A673 (cell line): ENCODE measurements at regions of chr10 and their contacts with region 1.

Region 1: DNA sequence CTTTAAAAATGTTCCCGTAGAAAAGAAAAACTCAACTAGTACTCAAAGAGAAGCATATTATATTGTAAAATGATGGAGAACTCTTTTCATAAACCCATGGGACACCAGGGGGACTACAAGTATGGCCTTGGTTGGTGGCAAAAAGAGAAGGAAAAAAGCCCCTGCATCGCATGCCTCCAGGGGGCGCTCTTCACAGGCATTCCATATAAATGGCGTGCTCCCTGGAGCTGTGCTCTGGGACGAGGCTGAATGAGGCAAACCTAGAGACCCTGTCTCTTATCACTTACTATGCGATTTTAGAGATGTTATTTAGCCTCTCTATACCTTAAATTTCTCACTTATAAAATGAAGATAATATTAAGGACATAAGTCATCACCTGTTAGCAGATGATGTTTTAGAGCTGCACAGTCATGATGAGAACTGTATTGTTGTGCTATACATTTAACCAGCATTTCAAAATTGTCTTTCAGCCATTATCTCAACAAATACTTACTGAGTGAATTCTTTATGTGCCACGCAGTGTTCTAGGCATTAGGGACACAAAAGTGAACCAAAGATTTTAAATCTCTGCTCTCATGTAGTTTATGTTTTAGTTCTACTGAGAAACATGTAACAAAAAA is 105.8 kb downstream of the ARHGAP21 start:
- DNase-seq: peak; percentile 74
- H3K4me3 ChIP-seq: no peak overlapping the region
- H3K27ac ChIP-seq: no peak overlapping the region
- H3K4me1 ChIP-seq: peaks cover 4% of the 10 kb centered on the region
- H3K27me3 ChIP-seq: no peaks in the 10 kb centered on the region
- CTCF ChIP-seq: peak; percentile 88

Region 2: DNA sequence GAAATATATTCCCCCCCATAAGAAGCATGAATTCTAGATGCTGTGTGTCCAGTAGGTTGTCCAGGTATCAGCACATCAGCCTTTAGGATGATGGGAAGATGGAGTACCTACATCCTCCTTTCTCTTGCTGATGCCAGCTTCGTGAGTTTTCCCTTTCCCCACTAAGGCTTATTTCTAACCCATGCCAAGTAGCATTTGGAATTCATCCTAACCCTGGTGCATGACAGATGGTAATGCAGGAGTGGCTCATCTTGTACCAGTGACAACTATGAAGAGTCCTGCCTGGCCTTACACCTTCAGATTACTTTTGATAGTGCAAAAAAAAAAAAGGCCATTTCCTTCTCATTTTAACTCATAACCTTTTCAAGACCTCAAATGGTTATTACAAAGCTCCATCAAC is 47.1 kb after region 1 on chr10:
- CTCF ChIA-PET with region 1: no interaction called
- POLR2A ChIA-PET with region 1: no interaction called
- intact Hi-C with region 1: no loop called
- DNase-seq: no peak
- H3K4me3 ChIP-seq: no peak overlapping the region
- H3K27ac ChIP-seq: no peak overlapping the region
- H3K4me1 ChIP-seq: no peaks in the 10 kb centered on the region
- H3K27me3 ChIP-seq: no peaks in the 10 kb centered on the region
- CTCF ChIP-seq: no peak

Region 3: GRCh38 chr10:24674892-24675632 is 57.2 kb after region 1 on chr10:
- CTCF ChIA-PET with region 1: interaction called, 11 read pairs
- POLR2A ChIA-PET with region 1: no interaction called
- intact Hi-C with region 1: no loop called
- DNase-seq: no peak
- H3K4me3 ChIP-seq: no peak overlapping the region
- H3K27ac ChIP-seq: no peak overlapping the region
- H3K4me1 ChIP-seq: no peaks in the 10 kb centered on the region
- H3K27me3 ChIP-seq: no peaks in the 10 kb centered on the region
- CTCF ChIP-seq: no peak